Heart right ventricle (tissue), 16 donors: ENCODE measurements at regions of chr11 and their contacts with region 1.

Region 1: DNA sequence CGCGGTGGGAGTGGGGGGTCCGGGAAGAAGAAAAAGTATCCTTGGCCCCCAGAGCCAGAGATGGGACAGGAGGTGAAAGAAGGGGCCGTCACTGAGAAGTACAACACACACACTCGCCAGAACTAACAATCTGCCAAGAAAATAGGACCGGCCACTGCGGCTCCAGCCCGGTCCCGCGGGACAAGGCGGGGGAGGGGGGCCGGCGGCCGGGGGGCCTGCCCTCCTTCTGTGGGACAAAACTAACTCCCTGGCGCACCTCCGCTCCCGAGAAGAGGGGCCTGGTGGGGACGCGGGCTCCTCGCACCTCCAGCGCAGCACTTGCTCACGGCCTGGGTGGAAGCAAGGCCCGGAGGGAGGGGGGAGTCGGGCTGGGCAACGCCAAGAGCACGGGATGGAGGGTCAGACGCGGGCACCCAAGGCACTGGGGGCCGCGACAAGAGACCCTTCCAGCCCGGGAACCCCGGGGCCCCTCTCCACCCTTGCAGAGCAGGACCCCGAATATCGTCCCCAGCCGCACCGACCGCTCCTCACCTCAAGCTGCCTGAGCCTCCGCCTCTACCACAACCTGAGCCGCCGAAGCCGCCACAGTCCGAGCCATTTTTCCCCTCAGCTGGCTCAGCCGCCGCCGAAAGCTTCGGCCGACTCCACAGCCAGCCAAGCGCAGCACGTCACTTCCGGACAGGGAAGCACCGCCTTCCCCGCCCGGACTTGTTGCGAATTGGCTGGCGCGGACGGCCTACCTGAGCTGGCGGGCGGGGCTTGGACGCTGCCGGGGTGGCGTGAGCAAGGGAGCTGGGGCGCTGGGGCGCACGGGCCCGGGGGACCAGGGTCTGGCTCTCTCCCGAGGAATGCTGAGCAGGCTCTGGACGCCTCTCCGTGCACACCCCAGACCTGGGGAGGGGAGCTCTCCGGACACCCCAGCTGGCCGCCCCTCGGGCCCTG is at the start of gene PIK3C2A:
- DNase-seq: peak; percentile 97
- ATAC-seq: peak; percentile 95 to 98 (median 98)
- H3K4me3 ChIP-seq: peak within 1 kb of the TSS; percentile 77 to 96 (median 92)
- H3K27ac ChIP-seq: peak within 1 kb of the TSS; percentile 91 to 98 (median 96)
- H3K4me1 ChIP-seq: peaks cover 3 to 55% (median 35%) of the 10 kb centered on the region in 9 donors
- H3K27me3 ChIP-seq: no peaks in the 10 kb centered on the region
- CTCF ChIP-seq: no peak
- total RNA-seq, gene PIK3C2A: 29.9 to 43.7 (median 32.7) TPM

Region 2: GRCh38 chr11:17077520-17078401 is 129.8 kb before region 1 on chr11 and contains the start of gene RPS13:
- intact Hi-C with region 1: loop called in 4 of 10 experiments (anchors 5 kb)
- DNase-seq: peak; percentile 94 to 98
- ATAC-seq: peak; percentile 97 to 100 (median 99)
- H3K4me3 ChIP-seq: peak within 1 kb of the TSS; percentile 73 to 97 (median 88)
- H3K27ac ChIP-seq: peak within 1 kb of the TSS; percentile 85 to 97 (median 94)
- H3K4me1 ChIP-seq: peaks cover 12 to 39% (median 30%) of the 10 kb centered on the region in 9 donors
- H3K27me3 ChIP-seq: no peaks in the 10 kb centered on the region
- CTCF ChIP-seq: no peak
- total RNA-seq, gene RPS13: 646 to 869 (median 686) TPM

Region 3: DNA sequence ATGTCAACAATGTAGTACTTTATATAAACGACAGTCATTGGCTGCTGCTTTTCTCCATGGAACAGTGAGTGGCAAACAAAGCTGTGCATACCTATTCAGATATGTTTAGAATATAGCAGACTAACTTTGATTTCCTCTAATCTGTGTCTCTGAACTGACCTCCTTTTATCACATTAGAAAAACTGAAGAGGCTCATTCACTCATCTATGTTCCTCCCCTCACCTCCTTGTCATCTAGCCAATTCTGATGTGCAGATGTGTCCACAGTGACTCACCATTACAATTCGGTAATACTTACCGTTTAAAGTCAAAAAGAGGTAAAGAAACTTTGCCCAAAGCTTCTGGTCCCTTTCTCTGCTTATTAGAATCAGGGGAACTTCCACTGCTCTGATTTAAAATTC is 78.6 kb before region 1 on chr11:
- intact Hi-C with region 1: no loop called
- DNase-seq: no peak
- ATAC-seq: no peak
- H3K4me3 ChIP-seq: no peak overlapping the region
- H3K27ac ChIP-seq: no peak overlapping the region
- H3K4me1 ChIP-seq: no peaks in the 10 kb centered on the region
- H3K27me3 ChIP-seq: no peaks in the 10 kb centered on the region
- CTCF ChIP-seq: no peak

Region 4: DNA sequence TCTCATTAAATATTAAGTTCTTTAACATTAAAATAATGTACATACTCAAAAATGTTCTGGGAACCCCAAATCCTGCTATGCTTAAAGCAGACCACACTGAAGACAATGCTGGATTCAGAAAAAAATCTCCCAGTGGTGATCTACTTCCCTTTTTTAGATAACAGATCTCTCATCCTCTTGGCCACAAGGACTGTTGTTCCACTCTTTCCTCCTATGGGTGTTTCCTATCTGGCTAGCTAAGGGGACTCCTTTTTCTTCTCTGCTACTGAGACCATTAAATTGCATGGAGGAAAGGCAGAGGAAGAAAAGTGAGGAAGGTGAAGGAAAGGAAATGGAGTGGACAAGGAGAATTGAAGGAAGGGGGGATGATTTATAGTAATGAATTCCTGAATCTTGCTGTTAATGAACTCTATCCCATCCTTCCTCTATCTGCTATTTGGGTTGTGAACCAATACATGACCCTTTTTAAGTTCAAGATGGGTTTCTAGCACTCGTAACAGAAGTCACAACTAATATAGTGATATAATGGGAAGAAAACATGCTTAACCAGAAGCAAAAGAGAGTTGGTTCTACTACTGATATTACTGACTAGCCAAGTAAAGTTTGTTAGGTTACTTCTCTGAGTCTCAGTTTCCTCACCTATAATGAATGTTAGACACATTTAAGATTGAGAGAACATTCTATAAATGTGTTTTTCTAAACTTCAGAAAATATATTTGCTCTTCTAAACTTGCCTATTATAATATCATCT is 53.0 kb before region 1 on chr11:
- intact Hi-C with region 1: loop called in 2 of 10 experiments (anchors 5 kb)
- DNase-seq: no peak
- ATAC-seq: peak in 4 of 8 donors; percentile 18 to 40 (median 28)
- H3K4me3 ChIP-seq: no peak overlapping the region
- H3K27ac ChIP-seq: peak overlapping the region in 8 of 10 donors; percentile 11 to 56 (median 34)
- H3K4me1 ChIP-seq: peaks cover 5 to 91% (median 55%) of the 10 kb centered on the region in 9 donors
- H3K27me3 ChIP-seq: no peaks in the 10 kb centered on the region
- CTCF ChIP-seq: no peak

Region 5: GRCh38 chr11:17164361-17165246 is 43.0 kb before region 1 on chr11:
- intact Hi-C with region 1: loop called in 2 of 10 experiments (anchors 5 kb)
- DNase-seq: peak in 1 of 2 donors; percentile 15
- ATAC-seq: peak; percentile 33 to 84 (median 71)
- H3K4me3 ChIP-seq: no peak overlapping the region
- H3K27ac ChIP-seq: peak overlapping the region in 9 of 10 donors; percentile 17 to 82 (median 62)
- H3K4me1 ChIP-seq: peaks cover 0 to 66% (median 56%) of the 10 kb centered on the region in 9 donors
- H3K27me3 ChIP-seq: no peaks in the 10 kb centered on the region
- CTCF ChIP-seq: no peak

Region 6: GRCh38 chr11:17276236-17277023 is 68.8 kb after region 1 on chr11 and contains the start of gene NUCB2:
- intact Hi-C with region 1: loop called in 2 of 10 experiments (anchors 1 kb)
- DNase-seq: peak; percentile 97 to 98
- ATAC-seq: peak; percentile 99
- H3K4me3 ChIP-seq: peak within 1 kb of the TSS; percentile 55 to 96 (median 91)
- H3K27ac ChIP-seq: peak within 1 kb of the TSS; percentile 87 to 97 (median 92)
- H3K4me1 ChIP-seq: peaks cover 0 to 39% (median 14%) of the 10 kb centered on the region in 9 donors
- H3K27me3 ChIP-seq: no peaks in the 10 kb centered on the region
- CTCF ChIP-seq: peak in 1 of 9 donors; percentile 8
- total RNA-seq, gene NUCB2: 78.8 to 175 (median 99.8) TPM